Common myeloid progenitor, CD34-positive (primary cell): ENCODE measurements at regions of chr12 and their contacts with region 1.

Region 1: DNA sequence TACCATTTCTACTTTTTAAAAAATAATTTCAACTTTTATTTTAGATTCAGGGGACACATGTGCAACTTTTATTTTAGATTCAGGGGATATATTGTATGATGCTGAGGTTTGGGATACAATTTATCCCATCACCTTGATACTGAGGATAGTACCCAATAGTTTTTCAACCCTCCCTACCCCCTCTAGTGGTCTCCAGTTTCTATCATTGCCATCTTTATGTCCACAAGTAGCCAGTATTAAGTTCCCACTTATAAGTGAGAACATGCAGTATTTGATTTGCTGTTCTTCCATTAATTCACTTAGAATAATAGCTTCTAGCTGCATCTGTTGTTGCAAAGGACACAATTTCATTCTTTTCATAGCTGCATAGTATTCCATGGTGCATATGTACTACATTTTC is 162.5 kb downstream of the ANKS1B start:
- DNase-seq: no peak
- H3K4me3 ChIP-seq: no peak overlapping the region
- H3K27ac ChIP-seq: no peak overlapping the region
- H3K4me1 ChIP-seq: no peaks in the 10 kb centered on the region
- H3K27me3 ChIP-seq: peaks cover 0 to 2% (median 0%) of the 10 kb centered on the region in 5 experiments

Region 2: DNA sequence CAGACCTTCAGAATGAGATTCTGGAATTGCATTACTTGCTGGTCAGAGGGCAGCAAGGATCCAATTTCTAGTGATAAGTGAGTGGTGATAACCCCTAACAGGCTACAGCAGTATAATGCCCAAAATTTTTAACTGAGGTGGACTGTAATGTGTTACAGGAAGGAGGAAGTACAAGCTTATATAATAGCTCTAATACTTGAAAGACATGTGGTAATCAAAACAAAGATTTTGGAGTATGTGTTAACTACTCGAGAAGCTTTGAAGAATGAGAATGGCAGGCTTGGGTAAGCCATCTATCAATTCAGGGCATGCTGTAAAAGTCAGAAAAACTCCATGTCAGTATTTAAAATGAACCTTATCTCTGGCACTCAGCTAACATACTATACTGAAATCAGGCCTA is 91.9 kb after region 1 on chr12:
- CTCF ChIA-PET with region 1: no interaction called
- POLR2A ChIA-PET with region 1: interaction called, 10 read pairs
- DNase-seq: no peak
- H3K4me3 ChIP-seq: no peak overlapping the region
- H3K27ac ChIP-seq: no peak overlapping the region
- H3K4me1 ChIP-seq: no peaks in the 10 kb centered on the region
- H3K27me3 ChIP-seq: peaks cover 0 to 2% (median 0%) of the 10 kb centered on the region in 5 experiments